ENCODE measurements at regions of chr17 and their contacts with region 1.

Region 1: DNA sequence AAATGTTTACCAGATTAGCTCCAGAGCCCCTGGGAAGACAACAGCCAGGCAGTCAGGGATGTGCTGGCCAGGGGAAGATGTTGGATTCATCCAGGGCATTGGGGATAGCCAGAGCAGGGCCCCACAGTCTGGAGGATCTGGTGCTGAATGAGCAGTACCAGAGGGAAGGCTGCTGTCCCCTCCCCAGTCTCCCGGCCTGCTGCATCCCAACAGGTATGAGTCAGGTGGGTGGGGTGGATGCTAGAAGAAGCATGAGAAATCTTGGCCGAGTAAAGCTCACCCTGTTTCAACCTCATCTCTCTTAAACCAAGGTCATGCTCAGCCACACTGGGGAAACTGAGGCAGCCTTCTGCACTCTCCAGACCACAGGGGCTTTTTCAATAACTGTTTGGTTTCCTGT is 71.9 kb upstream of the SEC14L1 start:
- DNase-seq: no peak
- H3K4me3 ChIP-seq: no peak overlapping the region
- CTCF ChIP-seq: no peak

Region 2: GRCh38 chr17:76816590-76817135 is 252.3 kb before region 1 on chr17:
- CTCF ChIA-PET with region 1: interaction called, 38 read pairs
- POLR2A ChIA-PET with region 1: no interaction called
- DNase-seq: no peak
- H3K4me3 ChIP-seq: no peak overlapping the region
- CTCF ChIP-seq: peak; percentile 74